ENCODE measurements at regions of chr11 and their contacts with region 1.

Region 1: DNA sequence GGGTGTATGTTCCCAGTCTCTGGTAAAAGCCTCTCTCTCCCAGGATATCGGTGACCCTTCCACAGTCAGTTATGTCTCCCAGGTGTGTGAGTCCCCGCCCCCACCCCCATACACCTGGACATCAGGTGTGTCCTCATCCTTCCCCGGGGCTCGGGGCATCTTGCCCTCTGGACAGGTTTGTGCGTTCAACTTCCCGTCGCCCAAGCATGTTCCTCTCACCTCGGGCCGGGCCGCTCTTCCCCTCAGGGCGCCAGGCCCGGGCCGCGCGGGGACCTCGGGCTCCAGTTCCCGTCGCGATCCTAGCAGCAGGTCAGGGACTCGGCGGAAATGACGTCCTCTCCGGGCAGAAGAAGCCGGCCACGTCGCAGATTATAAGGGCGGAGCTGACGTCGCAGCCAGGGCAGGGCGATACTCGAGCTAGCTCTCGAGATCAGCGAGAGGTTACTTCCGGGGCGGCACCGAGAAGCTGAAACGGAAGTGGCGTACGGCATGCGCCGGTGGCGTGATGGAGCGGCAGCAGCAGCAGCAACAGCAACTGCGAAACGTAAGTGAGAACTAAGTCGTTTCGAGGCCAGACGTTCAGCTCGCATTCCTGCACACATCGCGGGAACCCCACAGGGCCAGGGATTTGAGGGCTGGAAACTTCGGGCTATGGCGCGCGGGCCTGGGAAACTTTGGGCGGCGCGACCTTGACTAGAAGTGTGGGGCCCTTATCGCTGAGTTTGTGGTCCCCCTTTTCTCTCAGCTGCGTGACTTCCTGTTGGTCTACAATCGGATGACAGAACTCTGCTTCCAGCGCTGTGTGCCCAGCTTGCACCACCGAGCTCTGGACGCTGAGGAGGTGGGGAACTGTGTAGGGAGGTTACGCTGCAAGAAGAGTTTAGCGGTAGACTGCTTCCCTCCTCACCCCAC is at the starts of genes ARFIP2 and TIMM10B:
- H3K4me3 Mint-ChIP-seq: peak within 1 kb of the TSS; percentile 95
- H3K27ac Mint-ChIP-seq: peak within 1 kb of the TSS; percentile 96
- H3K4me1 Mint-ChIP-seq: peaks cover 42% of the 10 kb centered on the region
- H3K27me3 Mint-ChIP-seq: no peaks in the 10 kb centered on the region

Region 2: DNA sequence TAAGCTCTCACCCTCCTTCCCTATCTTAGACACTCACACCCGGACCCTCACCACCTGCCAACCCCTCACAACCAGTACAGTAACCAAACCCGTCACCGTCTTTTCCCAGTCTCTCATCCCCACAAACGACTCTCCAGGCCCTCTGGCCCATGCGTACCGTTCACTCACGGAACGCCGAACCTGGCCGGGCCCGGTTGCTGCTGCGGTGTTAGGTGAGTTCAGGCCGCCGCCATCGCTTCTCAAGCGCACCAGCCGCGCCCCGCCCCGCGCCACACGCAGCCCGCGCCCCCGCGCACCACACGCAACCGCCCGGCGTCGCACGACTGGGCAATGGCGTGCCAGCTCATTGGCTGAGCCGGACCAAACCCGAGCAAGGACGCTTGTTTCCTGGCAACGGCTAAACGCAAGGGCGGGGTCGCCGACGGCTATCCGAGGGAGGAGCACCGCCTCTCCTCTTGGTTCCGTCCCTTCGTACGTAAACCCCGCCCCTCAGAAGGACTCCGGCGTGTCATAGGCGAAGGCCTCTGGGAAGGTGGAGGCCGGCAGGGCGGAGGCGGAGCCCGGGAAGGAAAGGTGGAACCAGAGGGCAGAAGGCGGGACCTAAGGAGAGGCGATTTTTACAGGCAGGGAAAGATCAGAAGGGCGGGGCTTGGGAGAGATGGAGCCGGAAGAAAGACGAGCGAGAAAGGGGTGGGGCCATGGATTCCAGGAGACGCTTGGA is 246.7 kb before region 1 on chr11 and contains the start of gene FHIP1B:
- intact Hi-C with region 1: loop called (anchors 2 kb)
- H3K4me3 Mint-ChIP-seq: peak within 1 kb of the TSS; percentile 96
- H3K27ac Mint-ChIP-seq: peak within 1 kb of the TSS; percentile 95
- H3K4me1 Mint-ChIP-seq: peaks cover 57% of the 10 kb centered on the region
- H3K27me3 Mint-ChIP-seq: no peaks in the 10 kb centered on the region

Region 3: DNA sequence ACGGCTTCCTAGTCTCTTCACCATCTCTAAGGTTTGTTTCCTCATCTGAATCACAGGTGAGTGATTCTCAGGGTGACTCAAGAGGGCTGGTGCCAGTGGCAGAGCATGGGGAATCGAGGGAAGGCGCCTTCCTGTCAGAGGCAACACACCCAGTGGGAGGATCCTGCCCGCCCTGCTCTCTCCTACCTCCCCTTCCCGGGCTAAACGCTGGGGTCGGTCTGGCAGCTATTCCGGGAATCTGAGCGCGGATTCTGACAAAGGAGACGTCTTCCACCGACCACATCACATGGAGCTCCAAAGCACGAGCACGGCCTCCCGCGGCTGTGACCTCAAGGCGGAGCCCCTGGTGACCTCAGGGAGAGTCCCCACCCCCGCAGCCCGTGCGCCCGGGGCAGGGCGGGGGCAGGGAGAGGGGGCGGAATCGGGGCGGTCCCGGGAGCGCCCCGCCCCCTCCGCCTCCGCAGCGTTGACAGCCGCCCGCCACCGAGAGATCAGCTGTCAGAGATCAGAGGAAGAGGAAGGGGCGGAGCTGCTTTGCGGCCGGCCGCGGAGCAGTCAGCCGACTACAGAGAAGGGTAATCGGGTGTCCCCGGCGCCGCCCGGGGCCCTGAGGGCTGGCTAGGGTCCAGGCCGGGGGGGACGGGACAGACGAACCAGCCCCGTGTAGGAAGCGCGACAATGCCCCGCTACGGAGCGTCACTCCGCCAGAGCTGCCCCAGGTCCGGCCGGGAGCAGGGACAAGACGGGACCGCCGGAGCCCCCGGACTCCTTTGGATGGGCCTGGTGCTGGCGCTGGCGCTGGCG is 91.1 kb before region 1 on chr11 and contains the start of gene SMPD1:
- intact Hi-C with region 1: loop called (anchors 2 kb)
- H3K4me3 Mint-ChIP-seq: peak within 1 kb of the TSS; percentile 87
- H3K27ac Mint-ChIP-seq: peak within 1 kb of the TSS; percentile 94
- H3K4me1 Mint-ChIP-seq: peaks cover 34% of the 10 kb centered on the region
- H3K27me3 Mint-ChIP-seq: peaks cover 7% of the 10 kb centered on the region

Region 4: DNA sequence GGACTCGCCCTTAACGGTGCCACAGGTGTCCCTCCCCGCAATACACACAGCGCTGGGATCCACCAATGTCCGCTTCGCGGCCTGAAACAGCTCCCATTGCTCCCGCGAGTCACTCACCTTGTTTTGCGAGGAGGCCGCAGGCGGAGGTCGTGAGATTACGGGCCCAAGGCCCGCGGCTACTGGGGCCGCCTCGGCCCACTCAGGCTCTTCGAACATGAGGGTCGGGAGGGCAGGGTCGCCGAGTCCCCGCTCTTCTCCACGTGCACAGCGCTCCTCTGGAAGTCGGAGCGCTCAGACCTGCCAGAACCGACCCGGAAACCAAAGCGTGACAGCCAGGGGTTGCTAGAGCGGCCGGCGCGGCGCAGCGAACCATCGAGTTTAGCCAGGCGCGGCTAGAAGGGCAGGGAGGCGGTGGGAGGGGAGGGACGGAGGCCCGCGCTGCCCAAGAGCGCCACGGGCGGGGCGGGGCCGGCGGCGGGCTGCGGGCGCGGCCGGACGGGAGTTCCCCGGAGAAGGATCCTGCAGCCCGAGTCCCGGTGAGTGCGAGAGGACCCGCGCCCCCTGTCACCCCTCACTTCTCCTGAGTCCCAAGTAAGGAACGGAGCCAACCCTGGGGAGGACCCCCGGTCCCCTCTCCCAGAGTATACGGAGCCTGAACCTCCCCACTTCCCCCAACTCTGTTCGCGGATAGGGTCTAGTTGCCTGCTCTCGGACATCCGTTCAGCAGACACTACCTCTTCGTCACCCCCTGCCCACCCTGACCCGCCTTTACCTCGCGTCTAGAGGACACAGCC is 122.2 kb after region 1 on chr11 and contains the starts of genes ILK and RRP8:
- intact Hi-C with region 1: loop called (anchors 5 kb)
- H3K4me3 Mint-ChIP-seq: no peak within 1 kb of the TSS
- H3K27ac Mint-ChIP-seq: no peak within 1 kb of the TSS
- H3K4me1 Mint-ChIP-seq: peaks cover 16% of the 10 kb centered on the region
- H3K27me3 Mint-ChIP-seq: no peaks in the 10 kb centered on the region

Region 5: GRCh38 chr11:6619004-6619745 is 137.9 kb after region 1 on chr11 and contains the start of gene TPP1:
- intact Hi-C with region 1: loop called (anchors 5 kb)
- H3K4me3 Mint-ChIP-seq: no peak within 1 kb of the TSS
- H3K27ac Mint-ChIP-seq: no peak within 1 kb of the TSS
- H3K4me1 Mint-ChIP-seq: peaks cover 6% of the 10 kb centered on the region
- H3K27me3 Mint-ChIP-seq: peaks cover 2% of the 10 kb centered on the region

Measured in dendritic cell treated with granulocyte-macrophage colony-stimulating factor and Interleukin-4, amounts not matched to agents 40 ng/mL and 50 ng/mL, for 4 days (primary cell).